Right cardiac atrium (tissue), 5 donors: ENCODE measurements at regions of chr19 and their contacts with region 1.

Region 1: GRCh38 chr19:11987405-11988281 is 22.8 kb downstream of the ZNF763 start:
- DNase-seq: peak; percentile 98 to 99 (median 98)
- ATAC-seq: peak; percentile 100
- H3K4me3 ChIP-seq: peak overlapping the region; percentile 79
- H3K27ac ChIP-seq: peak overlapping the region; percentile 68
- H3K4me1 ChIP-seq: no peaks in the 10 kb centered on the region
- H3K27me3 ChIP-seq: no peaks in the 10 kb centered on the region

Region 2: DNA sequence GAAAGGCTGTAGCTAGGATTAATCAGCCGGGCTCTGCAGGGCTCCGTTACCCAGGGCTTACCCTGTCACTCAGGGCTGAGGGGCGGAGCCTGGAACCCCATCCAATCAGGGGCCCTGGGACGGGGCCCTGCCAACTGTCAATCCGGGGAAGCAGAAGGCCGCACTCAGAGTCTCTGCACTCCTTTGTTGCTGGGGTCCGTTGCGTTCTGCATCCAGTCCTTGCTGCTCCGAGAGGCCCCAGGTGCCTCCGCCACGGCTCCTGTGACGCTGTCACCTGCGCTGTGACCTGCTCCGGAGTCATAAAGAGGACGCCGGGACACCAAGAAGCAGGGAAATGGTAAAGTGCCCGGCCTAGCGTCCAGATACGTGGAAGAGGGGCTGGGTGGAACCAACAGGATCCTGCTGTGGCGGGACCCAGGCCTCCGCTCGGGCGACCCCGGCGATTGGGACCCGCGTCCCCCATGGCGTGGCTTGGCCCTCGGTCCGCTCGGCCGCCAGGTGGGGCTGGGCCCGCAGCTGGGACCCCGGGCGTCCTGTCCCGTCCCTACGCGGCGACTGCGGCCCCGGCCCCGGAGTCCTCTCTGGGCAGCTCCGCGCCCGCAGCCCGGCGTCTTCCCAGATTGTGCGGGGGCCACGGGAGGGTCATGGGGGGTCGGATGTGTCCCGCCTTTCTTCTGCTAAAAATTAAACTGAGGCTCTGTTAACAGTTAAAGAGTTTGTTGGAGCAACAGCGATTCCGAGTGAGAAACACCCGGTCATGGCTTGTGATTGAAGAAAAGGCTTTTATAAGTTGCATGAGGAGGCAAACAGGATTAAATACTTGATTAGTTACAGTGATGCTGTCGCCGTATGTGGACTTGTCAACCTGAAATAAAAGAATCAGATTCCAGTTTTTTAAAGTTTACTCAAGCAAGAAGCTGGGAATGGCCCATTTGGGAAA is 189.0 kb before region 1 on chr19 and contains the start of gene ZNF491:
- intact Hi-C with region 1: loop called in 2 of 4 experiments (anchors 5 to 10 kb)
- DNase-seq: peak; percentile 94 to 98 (median 97)
- ATAC-seq: peak; percentile 100
- H3K4me3 ChIP-seq: peak within 1 kb of the TSS; percentile 65
- H3K27ac ChIP-seq: peak within 1 kb of the TSS; percentile 86
- H3K4me1 ChIP-seq: peaks cover 4% of the 10 kb centered on the region
- H3K27me3 ChIP-seq: no peaks in the 10 kb centered on the region
- total RNA-seq, gene ZNF491: 3.1 to 3.8 (median 3.4) TPM

Region 3: DNA sequence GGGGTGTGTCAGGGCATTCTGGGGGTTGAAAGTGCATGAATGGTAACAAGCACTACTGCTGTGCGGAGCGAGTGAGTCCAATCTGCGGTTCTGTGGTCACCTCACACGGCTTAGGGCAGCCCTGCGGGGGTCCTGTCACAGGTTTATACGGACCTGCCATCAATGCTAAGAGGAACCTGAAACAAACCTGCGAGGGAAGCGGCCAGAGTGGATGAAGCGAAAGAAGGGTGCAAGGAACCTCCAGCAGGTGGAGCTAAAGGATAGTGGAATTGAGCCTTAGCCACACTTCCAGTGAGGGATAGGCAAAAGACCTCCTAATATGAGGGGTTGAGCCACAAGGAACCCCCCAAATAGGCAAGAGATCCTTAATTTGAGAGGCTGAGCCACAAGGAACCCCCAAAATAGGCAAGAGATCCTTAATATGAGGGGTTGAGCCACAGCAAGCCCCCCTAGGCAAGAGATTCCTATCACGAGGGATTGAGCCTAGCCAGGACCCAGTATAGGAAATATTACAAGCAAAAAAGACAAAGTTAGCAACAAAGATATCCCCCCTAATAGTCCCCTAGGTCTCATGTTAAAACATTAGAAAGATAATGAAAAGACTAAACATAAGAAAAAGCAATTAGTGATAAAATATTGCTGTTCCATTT is 106.4 kb before region 1 on chr19:
- intact Hi-C with region 1: loop called in 3 of 4 experiments (anchors 2 to 5 kb)
- DNase-seq: peak in 2 of 3 donors; percentile 28 to 58
- ATAC-seq: peak; percentile 68 to 79
- H3K4me3 ChIP-seq: no peak overlapping the region
- H3K27ac ChIP-seq: no peak overlapping the region
- H3K4me1 ChIP-seq: no peaks in the 10 kb centered on the region
- H3K27me3 ChIP-seq: no peaks in the 10 kb centered on the region

Region 4: DNA sequence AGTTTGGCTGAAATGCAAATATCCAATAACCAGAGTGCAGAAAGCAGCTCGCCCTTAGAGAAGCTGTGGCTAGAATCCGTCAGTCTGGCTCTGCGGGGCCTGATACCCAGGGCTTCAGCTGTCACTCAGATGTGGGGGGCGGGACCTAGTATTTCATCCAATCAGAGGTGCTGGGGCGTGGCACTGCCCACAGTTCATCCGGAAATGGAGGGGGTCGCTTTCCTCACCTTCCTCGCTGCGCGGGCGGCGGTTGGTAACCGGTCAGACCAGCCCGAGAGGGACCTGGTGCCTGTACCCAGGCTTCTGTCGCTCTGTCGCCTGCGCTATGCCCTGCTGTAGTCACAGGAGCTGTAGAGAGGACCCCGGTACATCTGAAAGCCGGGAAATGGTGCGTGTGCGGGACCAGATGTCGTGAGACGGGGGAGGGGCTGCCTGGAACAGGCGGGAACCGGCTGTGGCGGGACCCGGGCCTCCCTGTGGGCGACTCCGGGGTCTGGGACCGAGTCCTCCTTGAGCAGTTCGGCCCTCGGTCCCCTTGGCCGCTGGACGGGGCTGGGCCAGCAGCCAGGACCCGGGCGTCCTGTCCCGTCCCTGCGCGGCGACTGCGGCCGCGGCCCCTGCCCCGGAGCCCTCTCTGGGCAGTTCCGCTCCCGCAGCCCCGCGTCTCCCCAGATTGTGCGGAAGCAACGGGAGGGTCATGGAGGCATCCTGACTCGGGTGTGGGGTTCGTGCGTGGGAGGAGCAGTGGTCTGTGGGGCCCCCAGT is 62.6 kb before region 1 on chr19 and contains the start of gene ZNF700:
- intact Hi-C with region 1: loop called (anchors 2 to 10 kb)
- DNase-seq: peak; percentile 94 to 98 (median 96)
- ATAC-seq: peak; percentile 99
- H3K4me3 ChIP-seq: peak within 1 kb of the TSS; percentile 99
- H3K27ac ChIP-seq: peak within 1 kb of the TSS; percentile 98
- H3K4me1 ChIP-seq: no peaks in the 10 kb centered on the region
- H3K27me3 ChIP-seq: no peaks in the 10 kb centered on the region
- total RNA-seq, gene ZNF700: 4.6 to 6.2 (median 5.1) TPM

Region 5: GRCh38 chr19:11964858-11965645 is 22.6 kb before region 1 on chr19 and contains the start of gene ZNF763:
- intact Hi-C with region 1: loop called in 2 of 4 experiments (anchors 2 kb)
- DNase-seq: peak; percentile 93 to 98 (median 96)
- ATAC-seq: peak; percentile 99
- H3K4me3 ChIP-seq: peak within 1 kb of the TSS; percentile 65
- H3K27ac ChIP-seq: peak within 1 kb of the TSS; percentile 95
- H3K4me1 ChIP-seq: no peaks in the 10 kb centered on the region
- H3K27me3 ChIP-seq: no peaks in the 10 kb centered on the region
- total RNA-seq, gene ZNF763: 1.8 to 5.9 (median 3.7) TPM

Region 6: GRCh38 chr19:12047868-12048267 is 60.2 kb after region 1 on chr19:
- intact Hi-C with region 1: no loop called
- DNase-seq: no peak
- ATAC-seq: no peak
- H3K4me3 ChIP-seq: no peak overlapping the region
- H3K27ac ChIP-seq: no peak overlapping the region
- H3K4me1 ChIP-seq: no peaks in the 10 kb centered on the region
- H3K27me3 ChIP-seq: no peaks in the 10 kb centered on the region

Region 7: DNA sequence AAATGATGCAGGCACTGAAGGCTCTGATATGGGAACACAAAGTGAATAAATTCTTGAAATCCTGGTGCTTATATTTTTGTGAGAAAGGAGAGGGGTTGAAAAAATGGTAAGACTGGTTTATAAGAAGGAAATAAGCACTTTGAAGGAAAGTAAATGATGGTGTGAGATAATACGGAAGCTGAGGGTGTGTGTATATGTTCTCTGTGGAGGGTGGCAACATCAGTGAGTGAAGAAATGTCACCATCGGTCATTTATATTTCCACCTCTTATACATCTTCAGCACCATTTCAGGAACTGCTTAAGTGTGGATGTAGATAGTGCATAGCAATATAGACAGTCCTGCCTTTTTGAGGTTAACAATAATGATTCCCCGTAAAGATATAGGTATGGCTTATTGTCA is 192.7 kb after region 1 on chr19:
- intact Hi-C with region 1: no loop called
- DNase-seq: no peak
- ATAC-seq: no peak
- H3K4me3 ChIP-seq: no peak overlapping the region
- H3K27ac ChIP-seq: no peak overlapping the region
- H3K4me1 ChIP-seq: no peaks in the 10 kb centered on the region
- H3K27me3 ChIP-seq: no peaks in the 10 kb centered on the region